ENCODE measurements at regions of chr10 and their contacts with region 1.

Region 1: DNA sequence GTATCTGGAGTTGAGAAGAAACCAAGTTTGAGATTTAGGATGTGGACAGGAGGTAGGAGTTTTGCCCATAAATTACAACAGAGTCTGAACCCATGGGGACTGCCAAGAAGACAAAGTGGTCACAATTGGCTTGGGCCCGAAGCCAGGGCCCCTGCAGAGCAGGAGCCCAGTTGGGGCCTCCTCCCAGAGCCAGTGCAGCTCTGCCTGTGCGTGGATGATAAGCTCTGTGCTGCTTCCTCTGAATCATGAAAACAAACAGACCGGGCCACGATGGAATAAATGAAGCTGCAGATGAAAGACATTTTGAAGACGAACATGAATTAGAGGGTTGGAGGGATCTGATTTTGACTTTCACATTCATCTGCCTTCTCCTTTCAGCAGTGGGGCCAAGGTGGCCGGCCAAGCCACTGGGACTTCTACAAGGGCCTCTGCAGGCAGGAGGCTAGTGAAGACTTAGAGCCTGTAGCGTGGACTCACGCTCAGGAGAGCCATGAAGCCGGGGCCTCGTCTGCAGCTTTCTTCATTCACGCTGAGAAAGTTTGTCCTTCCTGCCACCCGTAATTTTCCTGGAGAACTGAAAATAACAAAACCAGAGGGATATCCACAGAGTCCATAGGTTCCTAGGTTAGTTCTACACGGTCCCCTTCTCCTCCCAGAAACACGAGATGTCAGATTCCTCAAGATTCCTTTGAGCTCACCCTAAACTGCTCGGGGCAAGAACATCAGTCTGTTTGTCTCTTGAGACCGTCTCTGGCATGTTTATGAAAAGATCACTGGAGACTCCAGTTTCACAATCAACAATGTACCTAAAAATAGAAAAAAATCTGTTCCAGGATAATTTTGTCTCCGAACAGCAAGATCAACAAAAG is 156.7 kb upstream of the LYZL1 start:
- DNase-seq: no peak
- H3K4me3 ChIP-seq: no peak overlapping the region
- H3K27ac ChIP-seq: no peak overlapping the region
- H3K4me1 ChIP-seq: peaks cover 5 to 13% (median 8%) of the 10 kb centered on the region in 4 donors
- H3K27me3 ChIP-seq: peaks cover 0 to 8% (median 0%) of the 10 kb centered on the region in 4 donors
- CTCF ChIP-seq: no peak
- EP300 ChIP-seq: no peak
- POLR2A ChIP-seq: no peak

Region 2: DNA sequence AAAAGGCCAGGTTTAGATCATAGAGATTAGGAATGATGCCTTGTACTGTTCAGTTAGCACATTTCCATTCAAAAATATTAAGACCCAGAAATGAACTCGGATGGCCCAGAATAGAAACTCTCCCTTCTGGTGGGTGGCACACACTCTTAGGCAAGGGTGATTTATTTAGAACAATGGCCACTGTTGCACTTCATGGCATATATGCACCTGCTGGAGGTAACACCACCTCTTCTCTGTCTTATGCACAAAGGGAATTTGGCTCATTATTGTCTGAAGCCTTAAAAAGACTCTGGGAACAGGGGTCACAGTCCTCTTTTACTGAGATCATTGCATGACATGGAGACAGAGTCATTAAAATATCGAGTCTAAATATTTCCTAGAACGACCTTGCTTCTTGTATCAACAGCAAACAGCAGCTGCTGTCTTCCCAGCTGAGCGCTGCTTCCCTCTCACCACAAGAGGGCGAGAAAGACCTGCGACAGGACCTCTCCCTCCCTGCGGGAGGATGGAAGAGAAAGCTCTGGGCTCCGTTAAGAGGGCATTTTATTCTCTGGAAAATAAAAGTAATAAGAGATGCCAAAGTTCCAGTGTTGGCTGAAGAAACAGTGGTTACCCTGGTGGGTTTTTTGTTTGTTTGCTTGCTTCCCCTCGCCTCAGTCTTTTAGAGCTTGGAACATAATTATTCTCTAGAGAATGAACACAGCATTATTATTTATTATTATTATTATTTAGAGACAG is 468.4 kb before region 1 on chr10:
- intact Hi-C with region 1: loop called (anchors 5 kb)
- DNase-seq: no peak
- H3K4me3 ChIP-seq: no peak overlapping the region
- H3K27ac ChIP-seq: no peak overlapping the region
- H3K4me1 ChIP-seq: peaks cover 0 to 18% (median 8%) of the 10 kb centered on the region in 4 donors
- H3K27me3 ChIP-seq: peaks cover 0 to 21% (median 5%) of the 10 kb centered on the region in 4 donors
- CTCF ChIP-seq: peak; percentile 92 to 97 (median 94)
- EP300 ChIP-seq: no peak
- POLR2A ChIP-seq: no peak

Region 3: DNA sequence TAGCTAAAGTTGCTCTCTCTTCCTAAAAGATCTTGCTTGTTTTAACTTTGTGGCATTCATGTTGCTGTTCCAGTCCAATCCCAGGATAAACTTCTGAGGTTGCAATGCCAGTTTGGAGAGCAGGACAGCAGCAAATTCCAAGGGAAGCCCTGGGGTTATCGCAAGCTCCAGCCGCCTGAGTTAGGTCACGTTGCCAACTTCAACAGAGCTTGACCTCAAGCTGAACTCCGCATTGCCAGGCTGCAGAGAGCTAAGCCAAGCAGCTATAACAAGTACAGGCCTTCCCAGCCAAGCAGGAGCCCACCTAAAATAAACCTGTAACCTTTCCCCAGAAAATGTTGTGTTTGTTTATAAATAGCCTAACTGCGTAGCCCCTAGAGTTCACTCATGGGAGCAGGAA is 17.8 kb after region 1 on chr10:
- intact Hi-C with region 1: no loop called
- DNase-seq: no peak
- H3K4me3 ChIP-seq: no peak overlapping the region
- H3K27ac ChIP-seq: no peak overlapping the region
- H3K4me1 ChIP-seq: peaks cover 0 to 6% (median 0%) of the 10 kb centered on the region in 4 donors
- H3K27me3 ChIP-seq: peaks cover 0 to 4% (median 0%) of the 10 kb centered on the region in 4 donors
- CTCF ChIP-seq: no peak
- EP300 ChIP-seq: no peak
- POLR2A ChIP-seq: no peak

Region 4: DNA sequence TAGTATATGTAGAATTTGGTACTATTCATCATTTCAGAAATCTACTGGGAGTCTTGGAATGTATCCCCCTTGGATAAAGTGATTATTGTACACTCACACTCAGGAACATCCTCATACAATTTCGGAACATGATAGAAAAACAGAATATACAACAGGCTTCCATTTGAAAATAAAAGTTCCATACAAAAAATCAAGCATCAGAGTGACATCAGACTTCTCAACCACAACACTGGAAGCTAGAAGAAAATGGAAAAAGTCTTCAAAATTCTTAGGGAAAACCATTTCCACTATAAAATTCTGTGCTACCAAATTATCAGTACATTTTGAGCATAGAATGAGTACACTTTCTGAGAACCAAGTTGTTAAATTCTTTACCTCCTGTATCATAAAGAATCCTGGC is 165.5 kb after region 1 on chr10:
- intact Hi-C with region 1: loop called (anchors 10 kb)
- DNase-seq: no peak
- H3K4me3 ChIP-seq: no peak overlapping the region
- H3K27ac ChIP-seq: no peak overlapping the region
- H3K4me1 ChIP-seq: no peaks in the 10 kb centered on the region
- H3K27me3 ChIP-seq: no peaks in the 10 kb centered on the region
- CTCF ChIP-seq: no peak
- EP300 ChIP-seq: no peak
- POLR2A ChIP-seq: no peak